Activated naive CD4-positive, alpha-beta T cell treated with anti-CD3 and anti-CD28 coated beads for 36 hours (primary cell): ENCODE measurements at regions of chr17 and their contacts with region 1.

Region 1: DNA sequence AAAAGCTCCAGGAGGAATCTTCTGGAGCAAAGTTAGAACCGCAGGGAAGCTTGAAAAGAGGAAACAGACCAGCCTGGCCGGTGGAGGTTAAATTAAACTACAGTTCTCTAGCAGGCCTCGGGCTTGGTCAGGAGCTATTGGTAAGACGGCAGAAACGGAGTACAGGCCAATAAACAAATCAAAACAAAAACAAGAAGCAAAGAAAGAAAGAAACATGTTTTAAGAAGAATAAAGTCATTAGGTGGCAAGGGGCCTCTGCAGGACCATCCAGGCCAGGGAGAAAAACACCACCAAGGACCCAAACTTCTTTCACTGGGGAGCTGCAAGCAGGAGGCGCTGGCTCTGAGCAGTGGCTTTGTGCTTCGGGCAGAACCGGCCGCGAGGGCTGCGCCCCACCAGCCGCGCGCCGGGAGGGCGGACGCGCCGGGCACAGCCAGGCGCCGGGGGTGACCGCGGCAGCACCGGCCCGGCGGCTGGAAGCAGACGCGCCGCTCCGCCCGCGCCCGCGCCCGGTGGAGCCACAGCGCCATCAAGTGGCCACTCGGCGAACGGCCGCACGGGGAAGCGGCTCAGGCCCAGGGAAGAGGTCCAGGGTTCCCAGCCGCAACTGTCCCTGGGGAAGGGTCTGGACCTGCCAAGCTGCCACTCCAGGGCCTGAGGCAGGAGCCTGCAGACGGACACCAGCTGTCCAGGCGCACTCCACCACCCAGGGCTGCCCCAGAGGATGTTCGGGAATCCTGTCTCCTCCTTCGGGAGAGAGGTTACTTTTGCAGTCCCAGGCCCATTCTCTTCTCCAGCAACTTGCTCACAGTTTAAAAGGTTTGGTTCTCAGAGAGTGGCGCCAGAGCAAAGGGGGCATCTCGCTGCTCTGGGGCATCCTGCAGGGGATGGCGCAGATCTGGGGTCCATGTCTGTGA is 419.4 kb downstream of the SOX9 start:
- DNase-seq: peak; percentile 57
- H3K4me3 Mint-ChIP-seq: no peak overlapping the region
- H3K27ac Mint-ChIP-seq: peak overlapping the region; percentile 31
- H3K4me1 Mint-ChIP-seq: peaks cover 3% of the 10 kb centered on the region
- H3K27me3 Mint-ChIP-seq: peaks cover 35% of the 10 kb centered on the region

Region 2: DNA sequence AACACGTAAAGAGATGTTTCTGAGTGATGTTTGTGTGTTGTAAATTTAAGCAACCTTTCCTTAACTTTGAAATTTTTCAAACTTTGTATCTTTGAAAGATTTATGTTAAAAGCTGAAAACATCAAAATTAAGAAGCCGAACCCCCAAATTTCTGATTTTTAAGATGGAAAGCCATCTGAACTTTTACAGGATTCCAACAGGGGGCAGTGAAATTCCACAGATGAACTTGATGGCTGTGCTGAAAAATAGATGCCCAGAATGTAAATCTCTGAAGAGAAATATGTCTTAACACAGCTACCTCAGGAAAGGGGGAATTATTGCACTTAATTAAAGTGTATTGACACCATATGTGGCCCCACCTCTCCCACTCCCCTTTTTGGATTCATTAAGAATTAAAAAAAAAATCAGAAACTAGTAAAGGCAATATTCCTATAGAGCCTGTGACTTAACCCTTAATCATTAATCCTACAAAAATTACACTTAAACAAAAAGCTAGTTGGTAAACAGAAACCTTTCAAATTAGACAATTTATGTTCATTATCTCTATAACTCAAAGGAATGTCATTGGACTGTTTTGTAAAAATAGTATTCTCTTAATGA is 1773.0 kb before region 1 on chr17:
- CTCF ChIA-PET with region 1: interaction called, 3 read pairs
- intact Hi-C with region 1: loop called (anchors 2 kb)
- DNase-seq: no peak
- H3K4me3 Mint-ChIP-seq: no peak overlapping the region
- H3K27ac Mint-ChIP-seq: no peak overlapping the region
- H3K4me1 Mint-ChIP-seq: no peaks in the 10 kb centered on the region
- H3K27me3 Mint-ChIP-seq: peaks cover under 1% of the 10 kb centered on the region